ENCODE measurements at regions of chr20 and their contacts with region 1.

Region 1: GRCh38 chr20:3563548-3564177 is 92.8 kb downstream of the ATRN start:
- DNase-seq: peak; percentile 63
- ATAC-seq: peak; percentile 84
- H3K4me3 ChIP-seq: no peak overlapping the region
- H3K27ac ChIP-seq: no peak overlapping the region
- H3K4me1 ChIP-seq: no peaks in the 10 kb centered on the region
- H3K27me3 ChIP-seq: no peaks in the 10 kb centered on the region
- CTCF ChIP-seq: peak; percentile 85
- EP300 ChIP-seq: no peak
- POLR2A ChIP-seq: no peak
- RAD21 ChIP-seq: peak; percentile 68; the same call in 1 of the 2 replicates

Region 2: DNA sequence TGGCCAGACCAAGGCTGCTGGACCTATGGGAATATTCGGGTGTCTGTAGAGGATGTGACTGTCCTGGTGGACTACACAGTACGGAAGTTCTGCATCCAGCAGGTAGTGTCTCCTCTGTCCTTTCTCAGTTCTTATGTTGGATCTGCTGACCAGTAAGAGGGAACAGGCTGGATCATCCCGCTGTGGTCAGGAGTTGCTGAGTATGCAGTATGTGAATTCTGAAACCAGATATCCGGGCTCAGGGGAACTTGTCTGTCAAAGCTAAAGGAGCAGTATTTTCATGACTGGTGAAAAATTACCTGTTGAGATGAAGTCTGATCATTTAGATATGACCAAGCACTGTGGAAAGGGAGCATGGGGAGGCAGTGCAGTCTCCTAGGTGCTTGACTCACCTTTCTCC is 542.3 kb before region 1 on chr20:
- CTCF ChIA-PET with region 1: no interaction called
- POLR2A ChIA-PET with region 1: no interaction called
- in situ Hi-C with region 1: no loop called
- intact Hi-C with region 1: no loop called
- DNase-seq: no peak
- ATAC-seq: peak; percentile 26
- H3K4me3 ChIP-seq: no peak overlapping the region
- H3K27ac ChIP-seq: no peak overlapping the region
- H3K4me1 ChIP-seq: peaks cover 36% of the 10 kb centered on the region
- H3K27me3 ChIP-seq: no peaks in the 10 kb centered on the region
- CTCF ChIP-seq: no peak
- EP300 ChIP-seq: no peak
- POLR2A ChIP-seq: no peak
- RAD21 ChIP-seq: no peak

Region 3: DNA sequence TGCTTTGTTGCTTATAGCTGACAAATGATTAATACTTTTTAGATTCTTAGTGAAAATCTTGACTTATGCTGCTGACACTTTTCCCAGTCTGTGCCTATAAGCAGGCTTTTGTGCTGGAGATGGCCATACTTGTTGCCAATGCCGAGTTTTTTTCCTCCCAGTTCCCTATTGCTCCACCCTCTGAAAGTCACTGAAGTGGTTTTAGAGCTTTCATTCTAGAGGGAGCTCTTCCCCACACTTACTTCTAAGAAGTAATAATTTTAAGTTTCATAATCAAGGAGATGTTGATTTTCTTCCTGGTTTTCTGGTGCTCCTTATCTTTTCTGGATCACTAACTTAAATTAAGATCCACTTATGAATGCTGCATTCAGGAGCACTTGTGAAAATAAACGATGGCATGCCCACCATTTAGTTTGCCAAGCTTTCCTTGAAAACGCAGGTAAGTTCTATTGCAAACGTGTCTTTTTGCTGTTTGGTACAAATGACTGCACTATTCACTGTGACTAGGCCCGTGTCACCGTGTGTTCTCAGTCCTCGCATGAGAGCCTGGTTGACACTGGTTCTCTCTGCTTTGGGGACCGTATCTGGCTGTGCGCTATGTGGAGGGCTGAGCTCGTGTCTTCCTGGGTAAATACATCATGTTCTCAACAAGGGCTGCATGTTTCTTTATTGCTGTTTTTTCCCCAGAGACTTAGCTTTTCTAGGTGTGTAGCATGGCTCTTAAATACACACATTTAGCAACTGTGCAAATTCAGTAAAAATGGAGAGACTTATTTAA is 49.3 kb after region 1 on chr20:
- CTCF ChIA-PET with region 1: no interaction called
- POLR2A ChIA-PET with region 1: no interaction called
- in situ Hi-C with region 1: no loop called
- intact Hi-C with region 1: loop called (anchors 1 kb)
- DNase-seq: no peak
- ATAC-seq: no peak
- H3K4me3 ChIP-seq: no peak overlapping the region
- H3K27ac ChIP-seq: no peak overlapping the region
- H3K4me1 ChIP-seq: no peaks in the 10 kb centered on the region
- H3K27me3 ChIP-seq: no peaks in the 10 kb centered on the region
- CTCF ChIP-seq: no peak
- EP300 ChIP-seq: no peak
- POLR2A ChIP-seq: no peak
- RAD21 ChIP-seq: no peak

Region 4: GRCh38 chr20:3632311-3633004 is 68.8 kb after region 1 on chr20:
- CTCF ChIA-PET with region 1: interaction called, 4 read pairs
- POLR2A ChIA-PET with region 1: no interaction called
- in situ Hi-C with region 1: no loop called
- intact Hi-C with region 1: loop called (anchors 1 kb)
- DNase-seq: peak; percentile 43
- ATAC-seq: peak; percentile 45
- H3K4me3 ChIP-seq: no peak overlapping the region
- H3K27ac ChIP-seq: no peak overlapping the region
- H3K4me1 ChIP-seq: peaks cover 38% of the 10 kb centered on the region
- H3K27me3 ChIP-seq: no peaks in the 10 kb centered on the region
- CTCF ChIP-seq: peak; percentile 65
- EP300 ChIP-seq: no peak
- POLR2A ChIP-seq: no peak
- RAD21 ChIP-seq: peak; percentile 58; the same call in 1 of the 2 replicates

Region 5: DNA sequence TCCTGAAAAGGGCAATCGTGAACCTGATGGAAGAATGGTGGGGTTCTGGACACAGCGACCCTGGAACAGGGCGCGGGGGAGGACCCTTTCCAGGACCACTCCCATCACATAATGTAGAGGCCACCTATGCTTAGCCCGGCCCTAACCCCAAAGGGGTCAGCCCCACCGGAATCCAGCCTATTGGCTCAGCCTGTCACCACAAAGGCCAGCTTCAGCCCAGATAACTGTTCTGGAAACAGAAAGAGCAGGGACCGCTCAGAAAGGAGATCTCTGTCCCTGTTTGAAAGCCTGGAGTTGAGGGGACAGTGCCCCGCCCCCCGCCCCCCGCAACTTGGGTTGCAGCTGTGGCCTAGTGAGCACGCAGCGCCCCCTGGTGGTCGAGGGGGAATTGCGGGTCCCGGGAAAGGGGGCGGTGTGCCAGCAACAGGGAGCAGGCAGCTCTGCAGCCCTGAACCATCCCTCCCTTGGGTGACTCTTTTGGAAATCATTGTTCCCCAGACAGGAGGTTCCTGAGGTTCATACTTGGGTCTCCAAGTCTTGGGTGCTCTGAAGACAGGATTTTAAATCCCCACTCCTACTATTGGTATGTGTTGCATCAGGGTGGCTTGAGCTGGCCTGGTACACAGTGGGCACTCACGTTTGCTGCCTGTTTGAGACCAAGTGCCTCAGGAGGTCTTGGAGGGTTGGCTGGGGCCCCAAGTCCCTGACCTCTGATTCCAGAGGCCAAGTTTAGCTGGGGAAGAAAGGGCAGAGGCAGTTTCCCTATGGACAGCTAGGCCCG is 147.2 kb after region 1 on chr20:
- CTCF ChIA-PET with region 1: interaction called, 6 read pairs
- POLR2A ChIA-PET with region 1: no interaction called
- in situ Hi-C with region 1: no loop called
- intact Hi-C with region 1: loop called (anchors 1 kb)
- DNase-seq: peak; percentile 46
- ATAC-seq: peak; percentile 76
- H3K4me3 ChIP-seq: no peak overlapping the region
- H3K27ac ChIP-seq: no peak overlapping the region
- H3K4me1 ChIP-seq: no peaks in the 10 kb centered on the region
- H3K27me3 ChIP-seq: peaks cover 9 to 41% of the 10 kb centered on the region in 2 experiments
- CTCF ChIP-seq: peak; percentile 98
- EP300 ChIP-seq: no peak
- POLR2A ChIP-seq: no peak
- RAD21 ChIP-seq: peak; percentile 92

Region 6: GRCh38 chr20:3846740-3847428 is 283.2 kb after region 1 on chr20 and contains the start of gene MAVS:
- CTCF ChIA-PET with region 1: no interaction called
- POLR2A ChIA-PET with region 1: no interaction called
- in situ Hi-C with region 1: no loop called
- intact Hi-C with region 1: no loop called
- DNase-seq: peak; percentile 90
- ATAC-seq: peak; percentile 96
- H3K4me3 ChIP-seq: peak within 1 kb of the TSS; percentile 78 to 97 (median 96)
- H3K27ac ChIP-seq: peak within 1 kb of the TSS; percentile 91
- H3K4me1 ChIP-seq: peaks cover 50% of the 10 kb centered on the region
- H3K27me3 ChIP-seq: no peaks in the 10 kb centered on the region; a peak in 1 of 5 replicates
- CTCF ChIP-seq: peak; percentile 68
- EP300 ChIP-seq: peak in 1 of 2 experiments; percentile 10; a peak in 1 of 4 replicates
- POLR2A ChIP-seq: peak; percentile 96 to 98
- RAD21 ChIP-seq: peak; percentile 63; the same call in 1 of the 2 replicates
- total RNA-seq, gene MAVS: 36.6 and 44.4 TPM in 2 replicates

Measured in HepG2 (cell line).